GM12878 (cell line): ENCODE measurements at regions of chr7 and their contacts with region 1.

Region 1: DNA sequence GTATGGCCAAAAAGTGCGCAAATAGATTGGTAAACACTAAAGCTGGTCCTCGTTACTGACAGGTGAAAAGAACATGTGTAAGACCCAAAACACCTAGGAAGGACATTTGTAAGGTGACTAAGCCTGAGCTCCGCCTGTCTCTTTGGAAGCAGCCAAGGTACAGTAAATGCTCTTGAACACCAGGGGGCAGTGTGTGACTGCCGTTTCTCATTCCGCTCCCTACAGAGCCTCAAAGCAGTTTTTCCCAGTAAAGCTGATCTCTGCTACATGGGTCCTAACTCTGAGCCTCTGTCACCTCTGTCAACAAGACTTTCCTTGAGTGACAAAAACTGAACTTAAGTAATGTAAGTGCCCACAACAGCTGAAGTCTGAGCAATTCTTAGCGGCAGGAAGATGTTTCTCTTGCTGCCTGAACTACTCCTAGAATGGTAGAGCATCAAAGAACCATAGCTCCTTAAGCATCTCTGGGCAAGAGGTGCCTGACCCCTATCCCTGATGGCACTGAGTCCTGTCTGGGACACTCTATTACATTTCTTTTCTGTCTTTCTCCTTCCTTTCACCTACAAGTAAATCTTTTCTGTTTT is 238.0 kb upstream of the INHBA start:
- DNase-seq: peak; percentile 25
- ATAC-seq: peak; percentile 87
- H3K4me3 ChIP-seq: no peak overlapping the region
- H3K27ac ChIP-seq: no peak overlapping the region
- H3K4me1 ChIP-seq: no peaks in the 10 kb centered on the region
- H3K27me3 ChIP-seq: peaks cover 0 to 2% of the 10 kb centered on the region in 2 experiments; a peak in 1 of 4 replicates
- CTCF ChIP-seq: peak; percentile 78 to 87 (median 86)
- EP300 ChIP-seq: no peak
- POLR2A ChIP-seq: no peak
- RAD21 ChIP-seq: peak; percentile 77

Region 2: DNA sequence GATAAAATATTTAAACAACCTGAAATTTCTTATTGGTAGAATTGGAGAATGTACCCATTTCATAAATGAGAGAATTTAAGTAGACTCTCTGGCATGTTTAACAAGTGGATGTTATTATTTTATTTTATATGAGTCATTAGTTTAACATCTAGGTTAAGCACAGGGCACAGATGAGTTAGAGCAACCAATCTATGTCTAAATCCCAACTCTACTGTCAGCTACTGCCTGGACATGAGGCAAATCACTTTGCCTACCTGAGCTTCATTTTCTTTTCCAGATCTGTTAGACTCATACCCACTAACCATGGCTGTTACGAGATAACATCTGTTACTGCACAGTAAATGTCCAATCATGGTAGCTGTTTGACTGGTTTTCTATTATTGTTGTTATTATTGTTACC is 489.0 kb before region 1 on chr7:
- CTCF ChIA-PET with region 1: no interaction called
- POLR2A ChIA-PET with region 1: no interaction called
- RAD21 ChIA-PET with region 1: no interaction called
- SMC1A ChIA-PET with region 1: no interaction called
- in situ Hi-C with region 1: no loop called
- intact Hi-C with region 1: no loop called
- DNase-seq: no peak
- ATAC-seq: no peak
- H3K4me3 ChIP-seq: no peak overlapping the region
- H3K27ac ChIP-seq: no peak overlapping the region
- H3K4me1 ChIP-seq: no peaks in the 10 kb centered on the region
- H3K27me3 ChIP-seq: no peaks in the 10 kb centered on the region
- CTCF ChIP-seq: no peak
- EP300 ChIP-seq: no peak
- POLR2A ChIP-seq: no peak
- RAD21 ChIP-seq: no peak

Region 3: GRCh38 chr7:41889040-41889439 is 51.8 kb before region 1 on chr7:
- CTCF ChIA-PET with region 1: interaction called, 25 read pairs
- POLR2A ChIA-PET with region 1: no interaction called
- RAD21 ChIA-PET with region 1: interaction called, 3 read pairs
- SMC1A ChIA-PET with region 1: interaction called, 6 read pairs
- in situ Hi-C with region 1: no loop called
- intact Hi-C with region 1: no loop called
- DNase-seq: no peak
- ATAC-seq: peak; percentile 71
- H3K4me3 ChIP-seq: no peak overlapping the region
- H3K27ac ChIP-seq: no peak overlapping the region
- H3K4me1 ChIP-seq: peaks cover 10% of the 10 kb centered on the region
- H3K27me3 ChIP-seq: no peaks in the 10 kb centered on the region
- CTCF ChIP-seq: 0 out of 6 replicates have a peak, but pooled peaks of 1 of the 3 experiments have one; percentile 31
- EP300 ChIP-seq: no peak
- POLR2A ChIP-seq: no peak
- RAD21 ChIP-seq: peak; percentile 49

Region 4: GRCh38 chr7:41922373-41922772 is 18.5 kb before region 1 on chr7:
- CTCF ChIA-PET with region 1: interaction called, 11 read pairs
- POLR2A ChIA-PET with region 1: no interaction called
- RAD21 ChIA-PET with region 1: interaction called, 7 read pairs
- SMC1A ChIA-PET with region 1: no interaction called
- in situ Hi-C with region 1: no loop called
- intact Hi-C with region 1: no loop called
- DNase-seq: no peak
- ATAC-seq: no peak
- H3K4me3 ChIP-seq: no peak overlapping the region
- H3K27ac ChIP-seq: no peak overlapping the region
- H3K4me1 ChIP-seq: no peaks in the 10 kb centered on the region
- H3K27me3 ChIP-seq: no peaks in the 10 kb centered on the region; a peak in 1 of 4 replicates
- CTCF ChIP-seq: no peak
- EP300 ChIP-seq: no peak
- POLR2A ChIP-seq: no peak
- RAD21 ChIP-seq: no peak

Region 5: GRCh38 chr7:41977151-41977651 is 36.3 kb after region 1 on chr7:
- CTCF ChIA-PET with region 1: interaction called, 89 read pairs
- POLR2A ChIA-PET with region 1: no interaction called
- RAD21 ChIA-PET with region 1: interaction called, 7 read pairs
- SMC1A ChIA-PET with region 1: interaction called, 13 read pairs
- in situ Hi-C with region 1: no loop called
- intact Hi-C with region 1: no loop called
- DNase-seq: no peak
- ATAC-seq: 0 out of 3 replicates have a peak, but pooled peaks have one; percentile 31
- H3K4me3 ChIP-seq: no peak overlapping the region
- H3K27ac ChIP-seq: no peak overlapping the region
- H3K4me1 ChIP-seq: no peaks in the 10 kb centered on the region
- H3K27me3 ChIP-seq: no peaks in the 10 kb centered on the region; a peak in 1 of 4 replicates
- CTCF ChIP-seq: peak; percentile 49 to 59 (median 58); a peak in 5 of 6 replicates
- EP300 ChIP-seq: no peak
- POLR2A ChIP-seq: no peak
- RAD21 ChIP-seq: peak; percentile 54

Region 6: GRCh38 chr7:42097757-42098191 is 156.9 kb after region 1 on chr7:
- CTCF ChIA-PET with region 1: no interaction called
- POLR2A ChIA-PET with region 1: no interaction called
- RAD21 ChIA-PET with region 1: no interaction called
- SMC1A ChIA-PET with region 1: no interaction called
- in situ Hi-C with region 1: no loop called
- intact Hi-C with region 1: no loop called
- DNase-seq: no peak
- ATAC-seq: peak; percentile 40; the same call in 1 of the 3 replicates
- H3K4me3 ChIP-seq: no peak overlapping the region
- H3K27ac ChIP-seq: no peak overlapping the region
- H3K4me1 ChIP-seq: no peaks in the 10 kb centered on the region
- H3K27me3 ChIP-seq: no peaks in the 10 kb centered on the region; a peak in 1 of 4 replicates
- CTCF ChIP-seq: no peak
- EP300 ChIP-seq: no peak
- POLR2A ChIP-seq: no peak
- RAD21 ChIP-seq: no peak

Region 7: GRCh38 chr7:42876182-42877068 is 935.6 kb after region 1 on chr7:
- CTCF ChIA-PET with region 1: interaction called, 13 read pairs
- POLR2A ChIA-PET with region 1: no interaction called
- RAD21 ChIA-PET with region 1: interaction called, 13 read pairs
- SMC1A ChIA-PET with region 1: interaction called, 13 read pairs
- in situ Hi-C with region 1: no loop called
- intact Hi-C with region 1: loop called (anchors 5 kb)
- DNase-seq: no peak
- ATAC-seq: peak; percentile 93
- H3K4me3 ChIP-seq: no peak overlapping the region
- H3K27ac ChIP-seq: no peak overlapping the region
- H3K4me1 ChIP-seq: no peaks in the 10 kb centered on the region
- H3K27me3 ChIP-seq: no peaks in the 10 kb centered on the region
- CTCF ChIP-seq: peak; percentile 76 to 86 (median 81)
- EP300 ChIP-seq: no peak
- POLR2A ChIP-seq: no peak
- RAD21 ChIP-seq: peak; percentile 70